Ascending aorta (tissue), 2 donors: ENCODE measurements at regions of chr9 and their contacts with region 1.

Region 1: GRCh38 chr9:81689343-81690190 is at the start of gene TLE1:
- DNase-seq: peak; percentile 99 to 100
- H3K4me3 ChIP-seq: peak within 1 kb of the TSS; percentile 80 to 83
- H3K27ac ChIP-seq: peak within 1 kb of the TSS; percentile 96 to 97
- H3K4me1 ChIP-seq: peaks cover 0 to 11% of the 10 kb centered on the region in 2 donors
- H3K27me3 ChIP-seq: no peaks in the 10 kb centered on the region
- CTCF ChIP-seq: no peak
- total RNA-seq, gene TLE1: 58.5 TPM

Region 2: GRCh38 chr9:81321046-81321504 is 368.5 kb before region 1 on chr9:
- intact Hi-C with region 1: loop called (anchors 5 kb)
- DNase-seq: no peak
- H3K4me3 ChIP-seq: no peak overlapping the region
- H3K27ac ChIP-seq: no peak overlapping the region
- H3K4me1 ChIP-seq: no peaks in the 10 kb centered on the region
- H3K27me3 ChIP-seq: no peaks in the 10 kb centered on the region
- CTCF ChIP-seq: no peak

Region 3: DNA sequence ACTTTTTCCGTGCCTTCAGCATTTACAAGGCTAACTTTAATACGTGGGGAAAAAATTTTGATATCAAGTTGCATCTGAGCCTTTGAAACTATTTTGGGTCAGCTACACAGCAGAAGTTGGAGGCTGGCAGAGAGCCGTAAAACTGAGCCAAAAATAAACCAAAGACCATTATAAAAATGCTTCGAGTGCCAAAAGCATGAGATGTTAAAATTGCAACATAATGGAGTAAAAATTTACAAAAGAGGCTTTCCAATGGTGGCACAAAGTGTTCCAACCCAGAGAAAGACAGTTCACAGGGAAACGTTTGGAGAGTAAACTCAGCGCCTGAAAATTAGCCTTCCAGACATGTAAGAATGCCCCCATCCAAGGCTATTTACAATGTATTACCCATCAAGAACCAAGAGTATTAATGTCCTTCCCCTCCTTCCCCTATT is 190.5 kb before region 1 on chr9:
- intact Hi-C with region 1: loop called (anchors 1 kb)
- DNase-seq: peak in 1 of 2 donors; percentile 78
- H3K4me3 ChIP-seq: peak overlapping the region; percentile 17 to 29
- H3K27ac ChIP-seq: peak overlapping the region; percentile 69 to 82
- H3K4me1 ChIP-seq: peaks cover 5 to 15% of the 10 kb centered on the region in 2 donors
- H3K27me3 ChIP-seq: no peaks in the 10 kb centered on the region
- CTCF ChIP-seq: no peak

Region 4: GRCh38 chr9:81588148-81588871 is 101.3 kb before region 1 on chr9:
- intact Hi-C with region 1: loop called (anchors 1 kb)
- DNase-seq: peak; percentile 49 to 93
- H3K4me3 ChIP-seq: peak overlapping the region in 1 of 2 donors; percentile 11
- H3K27ac ChIP-seq: peak overlapping the region; percentile 83 to 90
- H3K4me1 ChIP-seq: peaks cover 27 to 58% of the 10 kb centered on the region in 2 donors
- H3K27me3 ChIP-seq: no peaks in the 10 kb centered on the region
- CTCF ChIP-seq: no peak

Region 5: DNA sequence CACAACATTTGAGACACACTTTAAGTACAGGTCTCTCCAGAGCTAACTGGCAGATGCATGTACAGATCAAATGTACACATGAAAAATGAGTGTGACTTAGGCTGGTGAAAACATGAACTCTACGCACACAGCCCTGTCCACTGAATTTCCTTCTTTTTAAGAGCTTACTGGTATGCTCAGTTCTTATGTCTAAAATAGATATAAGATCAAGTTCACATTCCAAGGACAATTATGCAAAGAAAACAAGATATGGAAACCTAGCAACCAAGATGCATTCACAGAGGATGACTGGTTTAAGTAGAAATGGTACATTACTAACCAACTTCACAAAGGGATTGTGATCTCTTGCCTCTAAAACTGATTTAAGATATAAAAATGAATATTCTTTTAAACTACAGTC is 57.0 kb before region 1 on chr9:
- intact Hi-C with region 1: loop called (anchors 5 kb)
- DNase-seq: no peak
- H3K4me3 ChIP-seq: no peak overlapping the region
- H3K27ac ChIP-seq: no peak overlapping the region
- H3K4me1 ChIP-seq: peaks cover 0 to 6% of the 10 kb centered on the region in 2 donors
- H3K27me3 ChIP-seq: no peaks in the 10 kb centered on the region
- CTCF ChIP-seq: no peak

Region 6: GRCh38 chr9:81754245-81754644 is 64.7 kb after region 1 on chr9:
- intact Hi-C with region 1: loop called (anchors 2 kb)
- DNase-seq: peak in 1 of 2 donors; percentile 85
- H3K4me3 ChIP-seq: no peak overlapping the region
- H3K27ac ChIP-seq: peak overlapping the region; percentile 65 to 66
- H3K4me1 ChIP-seq: peaks cover 0 to 9% of the 10 kb centered on the region in 2 donors
- H3K27me3 ChIP-seq: no peaks in the 10 kb centered on the region
- CTCF ChIP-seq: no peak

Region 7: GRCh38 chr9:82490019-82490499 is 800.5 kb after region 1 on chr9:
- intact Hi-C with region 1: loop called (anchors 10 kb)
- DNase-seq: no peak
- H3K4me3 ChIP-seq: no peak overlapping the region
- H3K27ac ChIP-seq: peak overlapping the region; percentile 45 to 48
- H3K4me1 ChIP-seq: peaks cover 3 to 5% of the 10 kb centered on the region in 2 donors
- H3K27me3 ChIP-seq: no peaks in the 10 kb centered on the region
- CTCF ChIP-seq: no peak